H1 (cell line): ENCODE measurements at regions of chr6 and their contacts with region 1.

Region 1: GRCh38 chr6:120826253-120826652 is 508.0 kb downstream of the TBC1D32 start:
- DNase-seq: peak in 1 of 2 experiments; percentile 62
- H3K4me3 ChIP-seq: no peak overlapping the region
- H3K27ac ChIP-seq: no peak overlapping the region
- H3K4me1 ChIP-seq: no peaks in the 10 kb centered on the region
- H3K27me3 ChIP-seq: no peaks in the 10 kb centered on the region
- CTCF ChIP-seq: peak; percentile 52 to 73 (median 66)
- EP300 ChIP-seq: no peak
- POLR2A ChIP-seq: no peak
- RAD21 ChIP-seq: peak; percentile 74 to 81

Region 2: GRCh38 chr6:120405947-120406346 is 420.3 kb before region 1 on chr6:
- CTCF ChIA-PET with region 1: interaction called, 12 read pairs
- POLR2A ChIA-PET with region 1: no interaction called
- DNase-seq: peak; percentile 15 to 48
- H3K4me3 ChIP-seq: no peak overlapping the region
- H3K27ac ChIP-seq: no peak overlapping the region
- H3K4me1 ChIP-seq: no peaks in the 10 kb centered on the region
- H3K27me3 ChIP-seq: no peaks in the 10 kb centered on the region
- CTCF ChIP-seq: peak in 2 of 3 experiments; percentile 66 to 70; a peak in 3 of 4 replicates
- EP300 ChIP-seq: no peak
- POLR2A ChIP-seq: no peak
- RAD21 ChIP-seq: peak; percentile 84 to 88